B cell (primary cell): ENCODE measurements at regions of chr13 and their contacts with region 1.

Region 1: DNA sequence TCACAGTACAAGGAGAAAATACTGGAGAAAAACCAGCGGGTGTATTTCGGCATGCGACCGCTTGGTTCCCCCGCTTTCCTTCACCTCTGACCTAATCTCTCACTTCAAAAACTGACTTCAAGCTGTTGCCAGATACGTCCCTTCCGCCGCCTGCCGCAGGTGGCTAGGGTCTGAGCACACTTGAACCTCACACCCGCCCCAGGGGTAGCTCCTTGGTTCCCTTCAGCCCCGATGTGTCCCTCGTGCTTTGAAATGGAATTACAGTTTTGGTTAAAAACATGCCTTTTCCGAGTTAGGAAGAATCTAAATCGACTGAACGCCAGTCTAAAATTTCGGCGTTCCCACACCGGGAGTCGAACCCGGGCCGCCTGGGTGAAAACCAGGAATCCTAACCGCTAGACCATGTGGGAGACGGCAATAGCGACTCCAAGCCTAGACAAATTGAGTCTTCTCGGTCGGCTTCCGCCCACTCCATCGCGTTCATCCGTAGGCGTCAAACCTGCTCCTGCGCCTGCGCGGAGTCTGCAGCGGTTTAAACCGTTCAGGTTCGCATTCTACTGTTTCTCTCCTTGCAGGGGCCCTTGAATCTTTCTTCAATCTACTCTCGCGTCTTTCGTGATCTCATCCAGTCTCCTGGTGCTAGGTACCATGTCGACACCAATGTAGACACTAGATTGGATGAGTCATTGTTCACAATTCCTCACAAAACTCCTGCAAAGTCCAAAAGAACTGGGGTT is 71.5 kb downstream of the NUFIP1 start:
- DNase-seq: peak; percentile 99
- ATAC-seq: peak; percentile 74
- H3K4me3 ChIP-seq: peak overlapping the region; percentile 68 to 89 (median 76)
- H3K4me3 Mint-ChIP-seq: no peak overlapping the region
- H3K27ac ChIP-seq: peak overlapping the region; percentile 83 to 88
- H3K27ac Mint-ChIP-seq: no peak overlapping the region
- H3K4me1 ChIP-seq: peaks cover 9% of the 10 kb centered on the region in 2 donors
- H3K4me1 Mint-ChIP-seq: peaks cover 5% of the 10 kb centered on the region
- H3K27me3 ChIP-seq: no peaks in the 10 kb centered on the region
- H3K27me3 Mint-ChIP-seq: no peaks in the 10 kb centered on the region
- CTCF ChIP-seq: peak; percentile 44

Region 2: GRCh38 chr13:44274452-44275205 is 643.1 kb before region 1 on chr13:
- CTCF ChIA-PET with region 1: no interaction called
- POLR2A ChIA-PET with region 1: no interaction called
- intact Hi-C with region 1: loop called (anchors 5 kb)
- DNase-seq: peak; percentile 82
- ATAC-seq: peak; percentile 84
- H3K4me3 ChIP-seq: peak overlapping the region in 3 of 5 experiments; percentile 31 to 38 (median 35)
- H3K4me3 Mint-ChIP-seq: peak overlapping the region; percentile 65
- H3K27ac ChIP-seq: peak overlapping the region; percentile 74 to 83
- H3K27ac Mint-ChIP-seq: peak overlapping the region; percentile 85
- H3K4me1 ChIP-seq: peaks cover 29 to 44% of the 10 kb centered on the region in 2 donors
- H3K4me1 Mint-ChIP-seq: peaks cover 40% of the 10 kb centered on the region
- H3K27me3 ChIP-seq: no peaks in the 10 kb centered on the region
- H3K27me3 Mint-ChIP-seq: no peaks in the 10 kb centered on the region
- CTCF ChIP-seq: no peak

Region 3: GRCh38 chr13:44577236-44578066 is 340.3 kb before region 1 on chr13:
- CTCF ChIA-PET with region 1: interaction called, 3 read pairs
- POLR2A ChIA-PET with region 1: no interaction called
- intact Hi-C with region 1: loop called (anchors 1 kb)
- DNase-seq: peak; percentile 97
- ATAC-seq: peak; percentile 74
- H3K4me3 ChIP-seq: peak overlapping the region; percentile 50 to 94 (median 77)
- H3K4me3 Mint-ChIP-seq: peak overlapping the region; percentile 95
- H3K27ac ChIP-seq: peak overlapping the region; percentile 97 to 98
- H3K27ac Mint-ChIP-seq: peak overlapping the region; percentile 97
- H3K4me1 ChIP-seq: peaks cover 13 to 18% of the 10 kb centered on the region in 2 donors
- H3K4me1 Mint-ChIP-seq: peaks cover 30% of the 10 kb centered on the region
- H3K27me3 ChIP-seq: no peaks in the 10 kb centered on the region
- H3K27me3 Mint-ChIP-seq: peaks cover 1% of the 10 kb centered on the region
- CTCF ChIP-seq: no peak

Region 4: DNA sequence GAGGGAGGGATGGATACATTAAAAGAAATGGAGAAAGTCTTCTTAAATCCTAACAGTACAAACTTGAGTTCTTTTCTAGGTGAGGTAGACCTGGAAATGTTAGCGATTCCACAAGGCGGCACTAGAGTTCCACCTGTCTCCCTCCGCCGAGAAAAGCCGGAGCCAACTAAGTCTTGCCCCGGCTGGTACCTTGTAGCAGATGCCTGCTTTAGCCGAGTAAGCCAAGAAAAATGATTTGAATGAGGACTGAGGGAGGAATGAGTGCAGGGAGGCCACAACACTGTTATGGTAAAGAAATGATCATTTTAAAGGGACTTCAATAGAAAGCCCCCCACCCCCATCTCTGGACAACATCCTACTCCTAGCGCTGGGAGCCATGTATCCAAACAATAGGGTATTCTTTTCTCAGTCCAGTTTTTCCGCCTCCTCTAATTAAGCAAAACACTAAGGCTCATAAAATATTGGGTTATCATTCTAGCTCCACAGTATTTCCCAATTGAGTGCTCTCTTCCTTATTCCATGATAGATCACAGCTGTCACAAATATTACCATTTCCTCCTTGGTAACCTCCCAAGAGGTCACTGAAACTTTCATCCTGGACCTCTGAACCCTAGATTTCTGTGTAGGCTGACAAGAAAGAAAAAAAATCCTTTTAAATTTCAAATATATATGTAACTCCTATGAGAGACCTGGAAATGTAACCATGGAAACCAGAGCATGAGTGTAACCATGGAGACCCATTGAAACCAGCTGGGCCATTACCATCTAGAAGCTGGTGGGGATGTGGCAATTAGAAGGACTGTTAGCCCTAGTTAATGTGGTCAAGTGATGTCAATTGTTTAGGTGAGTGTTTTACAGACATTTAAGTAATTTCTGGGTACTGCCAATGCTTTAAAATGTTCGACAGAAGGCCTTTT is 129.9 kb after region 1 on chr13:
- CTCF ChIA-PET with region 1: no interaction called
- POLR2A ChIA-PET with region 1: no interaction called
- intact Hi-C with region 1: loop called (anchors 1 kb)
- DNase-seq: peak; percentile 82
- ATAC-seq: peak; percentile 87
- H3K4me3 ChIP-seq: peak overlapping the region in 3 of 5 experiments; percentile 30 to 55 (median 32)
- H3K4me3 Mint-ChIP-seq: peak overlapping the region; percentile 79
- H3K27ac ChIP-seq: no peak overlapping the region
- H3K27ac Mint-ChIP-seq: no peak overlapping the region
- H3K4me1 ChIP-seq: peaks cover 23 to 25% of the 10 kb centered on the region in 2 donors
- H3K4me1 Mint-ChIP-seq: peaks cover 23% of the 10 kb centered on the region
- H3K27me3 ChIP-seq: peaks cover 0 to 4% (median 2%) of the 10 kb centered on the region in 4 experiments
- H3K27me3 Mint-ChIP-seq: peaks cover 29% of the 10 kb centered on the region
- CTCF ChIP-seq: peak; percentile 83

Region 5: DNA sequence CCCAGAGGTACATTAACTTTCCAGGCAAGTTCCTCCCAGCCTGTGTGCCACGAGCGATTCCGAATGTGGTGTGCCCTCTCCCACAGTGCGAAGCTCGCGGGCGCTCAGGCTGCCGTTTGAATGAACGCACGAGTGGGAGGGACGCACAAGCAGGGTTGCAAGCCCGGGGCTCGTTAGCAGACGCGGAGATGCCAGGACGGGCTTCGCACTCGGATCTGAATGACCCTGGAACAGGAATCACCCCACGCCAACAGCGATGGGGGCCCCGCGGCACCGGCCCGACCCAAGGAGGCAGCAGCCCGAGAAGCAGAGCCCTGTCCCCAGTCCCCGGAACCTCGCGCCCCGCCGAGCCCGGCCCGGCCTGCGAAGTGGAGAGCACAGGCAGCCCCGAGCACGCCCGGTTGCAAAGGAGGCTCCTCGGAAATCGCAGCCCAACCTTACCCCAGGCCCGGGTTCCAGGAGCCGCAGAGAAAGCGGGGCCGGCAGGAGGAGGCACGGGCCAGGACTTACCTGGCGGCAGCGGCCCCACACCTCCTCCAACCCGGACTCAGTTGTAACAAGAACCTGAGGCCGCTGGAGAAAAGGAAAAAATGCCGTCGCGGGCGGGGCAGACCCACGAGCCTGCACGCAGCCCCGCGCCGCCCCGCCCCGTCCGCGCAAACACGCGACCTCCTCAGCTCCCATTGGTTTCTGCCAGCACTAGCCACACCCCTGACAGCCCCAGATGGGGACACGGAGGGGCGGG is 500.2 kb after region 1 on chr13 and contains the start of gene SLC25A30:
- CTCF ChIA-PET with region 1: no interaction called
- POLR2A ChIA-PET with region 1: no interaction called
- intact Hi-C with region 1: loop called (anchors 1 kb)
- DNase-seq: peak; percentile 92
- ATAC-seq: peak; percentile 95
- H3K4me3 ChIP-seq: peak within 1 kb of the TSS; percentile 68 to 91 (median 90)
- H3K4me3 Mint-ChIP-seq: peak within 1 kb of the TSS; percentile 97
- H3K27ac ChIP-seq: peak within 1 kb of the TSS; percentile 70 to 87
- H3K27ac Mint-ChIP-seq: peak within 1 kb of the TSS; percentile 96
- H3K4me1 ChIP-seq: peaks cover 9 to 11% of the 10 kb centered on the region in 2 donors
- H3K4me1 Mint-ChIP-seq: peaks cover 21% of the 10 kb centered on the region
- H3K27me3 ChIP-seq: no peaks in the 10 kb centered on the region
- H3K27me3 Mint-ChIP-seq: no peaks in the 10 kb centered on the region
- CTCF ChIP-seq: no peak
- total RNA-seq, gene SLC25A30: 16.9 and 25.8 TPM in 2 replicates

Region 6: GRCh38 chr13:46334035-46334822 is 1416.5 kb after region 1 on chr13:
- CTCF ChIA-PET with region 1: no interaction called
- POLR2A ChIA-PET with region 1: no interaction called
- intact Hi-C with region 1: no loop called
- DNase-seq: no peak
- ATAC-seq: peak; percentile 25
- H3K4me3 ChIP-seq: no peak overlapping the region
- H3K4me3 Mint-ChIP-seq: no peak overlapping the region
- H3K27ac ChIP-seq: no peak overlapping the region
- H3K27ac Mint-ChIP-seq: no peak overlapping the region
- H3K4me1 ChIP-seq: peaks cover 18 to 29% of the 10 kb centered on the region in 2 donors
- H3K4me1 Mint-ChIP-seq: peaks cover 41% of the 10 kb centered on the region
- H3K27me3 ChIP-seq: no peaks in the 10 kb centered on the region
- H3K27me3 Mint-ChIP-seq: no peaks in the 10 kb centered on the region
- CTCF ChIP-seq: no peak

Region 7: DNA sequence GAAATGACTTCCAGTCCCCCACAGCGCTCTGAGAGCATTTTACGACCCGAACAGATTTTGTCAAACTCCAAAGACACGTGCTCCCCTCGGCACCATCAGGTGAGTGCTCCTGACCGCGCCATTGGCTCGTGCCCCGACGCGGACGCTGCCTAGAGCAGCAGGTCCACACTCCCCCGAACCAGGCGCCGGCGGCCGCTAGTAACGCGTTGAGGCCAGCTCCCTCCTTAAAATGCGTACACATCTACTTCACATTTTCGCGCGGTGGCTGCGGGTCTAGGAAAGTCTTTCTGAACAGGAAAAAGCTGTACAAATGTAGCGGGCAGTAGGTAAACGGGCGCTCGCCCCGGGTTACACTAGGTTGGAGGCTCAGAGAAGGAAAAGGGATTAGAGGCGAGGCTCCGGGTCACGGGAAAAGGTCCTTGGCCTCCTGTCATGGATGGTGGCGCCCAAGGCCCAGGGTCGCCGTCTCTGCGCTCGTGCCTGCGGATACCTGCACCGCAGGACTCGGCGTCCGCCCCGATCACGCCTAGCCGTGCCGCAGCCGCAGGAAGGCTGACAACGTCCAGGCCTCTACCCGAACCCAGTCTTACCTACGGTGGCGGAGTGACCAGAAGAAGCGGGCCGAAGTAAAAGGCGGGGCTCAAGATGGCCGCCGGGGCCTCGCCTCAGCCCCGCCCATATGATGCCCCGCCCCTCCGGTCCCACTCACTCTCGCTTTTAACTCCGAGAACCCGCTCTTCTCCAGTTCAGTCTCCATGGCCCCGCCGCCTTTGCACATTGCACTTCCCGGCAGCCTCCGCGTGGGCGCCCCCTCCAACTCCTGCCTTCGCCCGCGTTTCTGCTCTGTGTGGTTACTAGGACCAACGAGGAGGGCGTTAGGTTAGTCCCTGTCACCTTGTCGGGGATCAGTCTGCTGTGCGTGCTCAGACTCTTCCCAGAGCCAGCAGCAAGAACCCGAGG is 1879.0 kb after region 1 on chr13 and contains the start of gene ESD:
- CTCF ChIA-PET with region 1: no interaction called
- POLR2A ChIA-PET with region 1: no interaction called
- intact Hi-C with region 1: loop called (anchors 10 kb)
- DNase-seq: peak; percentile 89
- ATAC-seq: peak; percentile 93
- H3K4me3 ChIP-seq: peak within 1 kb of the TSS; percentile 56 to 99 (median 77)
- H3K4me3 Mint-ChIP-seq: peak within 1 kb of the TSS; percentile 90
- H3K27ac ChIP-seq: peak within 1 kb of the TSS; percentile 78 to 89
- H3K27ac Mint-ChIP-seq: peak within 1 kb of the TSS; percentile 93
- H3K4me1 ChIP-seq: peaks cover 16 to 18% of the 10 kb centered on the region in 2 donors
- H3K4me1 Mint-ChIP-seq: peaks cover 30% of the 10 kb centered on the region
- H3K27me3 ChIP-seq: no peaks in the 10 kb centered on the region
- H3K27me3 Mint-ChIP-seq: no peaks in the 10 kb centered on the region
- CTCF ChIP-seq: no peak
- total RNA-seq, gene ESD: 52.9 and 53.4 TPM in 2 replicates